Caco-2 (cell line): ENCODE measurements at regions of chr19 and their contacts with region 1.

Region 1: GRCh38 chr19:34974646-34975045 is 10.6 kb upstream of the ZNF792 start:
- DNase-seq: no peak
- H3K4me3 ChIP-seq: no peak overlapping the region
- H3K4me3 Mint-ChIP-seq: peak overlapping the region; percentile 34
- H3K27ac Mint-ChIP-seq: peak overlapping the region; percentile 76
- H3K4me1 ChIP-seq: peaks cover 30% of the 10 kb centered on the region
- H3K4me1 Mint-ChIP-seq: peaks cover 17% of the 10 kb centered on the region
- H3K27me3 ChIP-seq: no peaks in the 10 kb centered on the region
- H3K27me3 Mint-ChIP-seq: no peaks in the 10 kb centered on the region
- CTCF ChIP-seq: no peak

Region 2: DNA sequence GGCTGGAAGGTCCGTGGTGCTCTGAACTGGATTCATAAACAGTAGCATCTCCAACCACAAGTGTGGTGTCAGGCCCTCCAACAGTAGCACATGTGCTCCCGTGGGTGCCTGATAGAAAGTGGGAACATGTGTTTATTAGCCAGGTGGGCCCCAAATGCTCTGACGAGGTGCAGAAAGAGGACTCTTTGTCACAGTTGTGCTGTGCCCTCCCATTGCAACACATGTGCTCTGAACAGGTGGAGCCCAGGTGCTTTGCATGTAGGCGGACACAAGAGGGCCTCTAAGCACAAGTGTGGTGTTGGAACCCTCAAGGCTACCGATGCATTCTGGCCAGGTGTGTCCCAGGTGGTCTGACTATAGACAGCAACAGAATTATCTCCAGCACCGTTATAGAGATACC is 123.3 kb before region 1 on chr19:
- CTCF ChIA-PET with region 1: no interaction called
- POLR2A ChIA-PET with region 1: no interaction called
- intact Hi-C with region 1: loop called (anchors 1 kb)
- DNase-seq: peak; percentile 62 to 67
- H3K4me3 ChIP-seq: no peak overlapping the region
- H3K4me3 Mint-ChIP-seq: no peak overlapping the region
- H3K27ac Mint-ChIP-seq: no peak overlapping the region
- H3K4me1 ChIP-seq: no peaks in the 10 kb centered on the region
- H3K4me1 Mint-ChIP-seq: no peaks in the 10 kb centered on the region
- H3K27me3 ChIP-seq: no peaks in the 10 kb centered on the region
- H3K27me3 Mint-ChIP-seq: peaks cover 13% of the 10 kb centered on the region
- CTCF ChIP-seq: peak; percentile 39 to 53

Region 3: DNA sequence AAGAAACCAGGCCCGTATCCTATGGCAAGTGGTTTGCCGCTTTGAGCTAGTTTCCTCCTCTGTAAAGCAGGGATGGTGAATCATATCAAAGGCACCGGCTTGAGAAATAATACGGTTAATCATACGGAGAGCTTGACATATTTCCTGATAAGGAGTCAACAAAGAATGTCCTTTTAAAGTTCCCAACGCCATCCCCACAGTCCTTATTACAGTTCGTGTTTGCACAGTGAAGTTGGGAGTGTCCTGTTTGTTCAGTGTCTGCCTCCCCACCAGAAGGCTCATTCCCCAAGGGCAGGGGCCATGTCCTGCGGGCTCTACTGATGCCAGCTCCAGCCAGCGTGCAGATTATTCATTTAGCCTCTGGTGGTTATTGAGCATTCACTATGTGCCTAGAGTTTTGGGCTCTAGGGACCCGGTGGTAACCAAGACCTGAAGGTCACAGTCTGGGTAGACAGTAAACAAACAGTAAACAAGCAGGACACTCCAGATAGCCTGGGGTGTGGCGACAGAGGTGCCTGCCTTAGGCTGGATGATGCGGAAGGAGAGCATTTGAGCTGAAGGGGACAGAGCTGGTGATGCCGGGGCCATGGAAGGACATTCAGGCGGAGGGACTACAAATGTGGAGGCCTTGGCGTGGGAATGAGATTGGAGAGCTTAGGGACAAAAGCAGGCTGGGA is 31.8 kb after region 1 on chr19:
- CTCF ChIA-PET with region 1: interaction called, 9 read pairs
- POLR2A ChIA-PET with region 1: interaction called, 4 read pairs
- intact Hi-C with region 1: loop called (anchors 1 kb)
- DNase-seq: peak; percentile 94 to 96
- H3K4me3 ChIP-seq: no peak overlapping the region
- H3K4me3 Mint-ChIP-seq: peak overlapping the region; percentile 70
- H3K27ac Mint-ChIP-seq: peak overlapping the region; percentile 98
- H3K4me1 ChIP-seq: peaks cover 55% of the 10 kb centered on the region
- H3K4me1 Mint-ChIP-seq: peaks cover 52% of the 10 kb centered on the region
- H3K27me3 ChIP-seq: no peaks in the 10 kb centered on the region
- H3K27me3 Mint-ChIP-seq: no peaks in the 10 kb centered on the region
- CTCF ChIP-seq: no peak

Region 4: DNA sequence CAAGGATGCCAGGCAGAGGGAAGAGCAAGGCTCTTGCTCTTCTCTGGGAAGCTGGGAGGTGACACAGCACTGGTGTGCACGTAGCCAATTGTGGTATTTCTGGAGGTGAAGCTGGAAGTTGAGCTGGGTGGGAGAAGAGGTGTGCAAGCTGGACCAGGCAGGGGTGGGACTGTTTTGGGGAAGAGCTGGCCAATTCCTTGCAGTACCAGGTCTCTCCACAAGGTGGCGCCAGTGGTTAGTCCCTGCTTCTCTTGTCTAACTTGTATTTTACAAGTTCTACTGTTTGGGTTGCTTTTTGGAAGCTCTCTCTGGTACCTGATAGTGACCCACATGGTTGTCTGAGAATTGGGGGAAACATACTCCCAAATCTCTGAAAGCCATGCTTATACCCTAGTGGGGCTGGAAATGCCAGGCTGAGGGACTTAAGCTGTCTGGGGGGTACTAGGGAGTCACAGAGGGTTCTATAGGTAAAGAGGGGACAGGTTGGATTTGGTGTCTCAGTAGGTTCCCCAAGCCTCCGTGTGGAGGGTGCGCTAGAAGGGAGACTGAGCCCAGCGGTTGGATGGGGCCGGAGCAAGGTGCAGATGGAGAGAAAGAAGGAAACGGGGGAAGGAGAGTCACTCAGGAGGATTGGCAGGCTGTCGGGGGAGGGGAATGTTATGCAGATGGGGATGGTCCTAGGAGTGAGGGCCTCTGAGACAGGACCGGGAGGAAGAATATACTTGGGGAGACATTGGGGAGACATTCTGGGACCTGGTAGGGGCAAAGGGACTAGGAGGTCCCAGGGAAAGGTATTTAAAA is 69.9 kb after region 1 on chr19:
- CTCF ChIA-PET with region 1: no interaction called
- POLR2A ChIA-PET with region 1: no interaction called
- intact Hi-C with region 1: loop called (anchors 1 kb)
- DNase-seq: peak in 1 of 2 experiments; percentile 68
- H3K4me3 ChIP-seq: no peak overlapping the region
- H3K4me3 Mint-ChIP-seq: no peak overlapping the region
- H3K27ac Mint-ChIP-seq: no peak overlapping the region
- H3K4me1 ChIP-seq: peaks cover 36% of the 10 kb centered on the region
- H3K4me1 Mint-ChIP-seq: peaks cover 25% of the 10 kb centered on the region
- H3K27me3 ChIP-seq: no peaks in the 10 kb centered on the region
- H3K27me3 Mint-ChIP-seq: no peaks in the 10 kb centered on the region
- CTCF ChIP-seq: peak; percentile 88 to 99

Region 5: DNA sequence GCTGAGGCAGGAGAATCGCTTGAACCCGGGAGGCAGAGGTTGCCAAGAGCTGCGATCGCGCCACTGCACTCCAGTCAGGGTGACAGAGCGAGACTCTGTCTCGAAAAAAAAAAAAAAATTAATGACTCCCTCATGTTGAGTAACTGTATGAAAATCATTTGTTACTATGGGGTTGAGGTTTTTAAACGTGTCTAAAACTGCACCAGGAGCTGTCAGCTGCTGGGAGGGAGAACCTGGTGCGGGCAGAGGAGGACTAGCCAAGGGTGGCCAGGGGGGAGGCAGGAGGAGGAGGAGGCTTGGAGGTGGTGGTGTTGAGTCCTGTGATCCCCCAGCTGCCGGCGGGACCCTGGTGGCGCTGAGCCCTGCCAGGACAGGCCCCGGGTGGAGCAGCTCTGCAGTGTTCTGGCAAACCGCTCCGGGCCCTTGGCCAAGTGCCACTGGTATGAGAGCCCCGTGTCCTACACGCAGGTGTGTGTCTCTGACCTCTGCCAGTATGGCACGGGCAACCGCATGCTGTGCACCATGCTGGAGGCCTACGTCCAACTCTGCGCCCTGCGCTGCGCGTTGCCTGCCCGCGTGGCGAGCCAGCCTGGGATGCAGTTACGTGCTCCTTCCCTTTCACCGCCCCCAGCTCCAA is 123.9 kb after region 1 on chr19:
- CTCF ChIA-PET with region 1: no interaction called
- POLR2A ChIA-PET with region 1: no interaction called
- intact Hi-C with region 1: no loop called
- DNase-seq: no peak
- H3K4me3 ChIP-seq: no peak overlapping the region
- H3K4me3 Mint-ChIP-seq: no peak overlapping the region
- H3K27ac Mint-ChIP-seq: no peak overlapping the region
- H3K4me1 ChIP-seq: peaks cover 22% of the 10 kb centered on the region
- H3K4me1 Mint-ChIP-seq: peaks cover 28% of the 10 kb centered on the region
- H3K27me3 ChIP-seq: no peaks in the 10 kb centered on the region
- H3K27me3 Mint-ChIP-seq: no peaks in the 10 kb centered on the region
- CTCF ChIP-seq: no peak

Region 6: GRCh38 chr19:35135389-35135909 is 160.8 kb after region 1 on chr19:
- CTCF ChIA-PET with region 1: no interaction called
- POLR2A ChIA-PET with region 1: no interaction called
- intact Hi-C with region 1: loop called (anchors 5 kb)
- DNase-seq: peak; percentile 82 to 89
- H3K4me3 ChIP-seq: no peak overlapping the region
- H3K4me3 Mint-ChIP-seq: no peak overlapping the region
- H3K27ac Mint-ChIP-seq: no peak overlapping the region
- H3K4me1 ChIP-seq: peaks cover 11% of the 10 kb centered on the region; the same call in 1 of the 2 replicates
- H3K4me1 Mint-ChIP-seq: peaks cover 7% of the 10 kb centered on the region
- H3K27me3 ChIP-seq: no peaks in the 10 kb centered on the region
- H3K27me3 Mint-ChIP-seq: peaks cover 2% of the 10 kb centered on the region
- CTCF ChIP-seq: peak; percentile 94 to 96